ENCODE measurements at regions of chr1 and their contacts with region 1.

Region 1: DNA sequence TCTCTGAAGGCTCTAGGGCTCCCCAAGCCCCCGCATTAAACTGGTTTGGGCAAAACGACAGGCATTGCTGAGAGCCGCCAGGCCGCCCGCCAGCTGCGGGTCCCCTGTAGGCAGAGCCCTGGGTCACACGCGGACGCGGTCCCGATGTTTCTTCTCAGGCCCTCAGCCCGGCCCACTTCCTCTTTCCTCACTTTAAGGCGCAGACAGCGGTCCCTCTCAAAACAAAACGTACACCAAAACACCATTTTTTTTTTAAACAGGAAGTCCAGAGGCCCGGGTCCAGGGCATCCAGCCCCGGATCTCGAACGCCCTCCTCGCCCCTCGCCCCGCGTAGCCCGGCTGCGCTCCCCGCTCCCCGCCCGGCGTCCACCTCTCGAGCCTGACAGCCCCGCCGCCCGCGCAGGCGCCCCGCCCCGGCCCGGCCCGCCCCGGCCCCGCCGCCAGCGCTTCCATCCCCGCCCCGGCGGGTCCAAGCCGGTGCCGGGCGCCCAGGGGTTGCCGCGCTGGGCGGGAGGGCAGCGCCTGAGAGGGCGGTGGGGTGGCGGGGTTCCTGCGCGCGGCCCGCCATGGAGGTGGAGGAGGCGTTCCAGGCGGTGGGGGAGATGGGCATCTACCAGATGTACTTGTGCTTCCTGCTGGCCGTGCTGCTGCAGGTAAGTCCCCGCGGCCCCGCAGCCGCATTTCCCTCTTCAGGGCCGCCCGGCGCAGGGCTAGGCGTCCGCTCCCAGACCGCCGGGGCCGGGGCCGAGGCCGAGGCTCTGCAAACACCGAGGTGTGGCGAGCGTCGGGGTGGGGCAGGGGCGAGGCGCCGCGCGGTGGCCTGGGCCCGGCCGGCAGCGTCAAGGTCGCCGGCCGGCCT is at the start of gene SLC22A15:
- DNase-seq: peak; percentile 93
- ATAC-seq: peak; percentile 87
- total RNA-seq, gene SLC22A15: 10.3 TPM

Region 2: DNA sequence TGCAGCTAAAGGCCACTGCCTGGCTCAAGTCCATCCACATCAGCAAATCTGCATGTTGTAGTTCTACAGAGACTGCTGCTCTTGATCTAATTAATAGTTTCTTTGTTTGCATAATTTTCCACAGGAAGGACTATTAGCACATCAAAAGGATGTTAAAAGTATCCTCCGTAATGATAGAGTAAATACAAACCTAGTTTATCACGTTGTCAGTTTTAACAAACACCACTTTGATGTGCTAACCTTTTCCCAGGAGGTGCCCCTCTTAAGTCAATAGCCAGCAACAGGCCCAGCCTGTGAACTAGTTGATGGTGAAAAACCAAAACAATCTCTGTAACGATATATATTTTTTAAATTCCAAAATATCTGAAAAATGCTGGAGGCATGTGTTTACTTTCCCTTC is 64.2 kb before region 1 on chr1:
- intact Hi-C with region 1: no loop called
- DNase-seq: no peak
- ATAC-seq: no peak

Region 3: GRCh38 chr1:116019653-116020253 is 43.5 kb after region 1 on chr1:
- intact Hi-C with region 1: loop called (anchors 5 kb)
- DNase-seq: no peak
- ATAC-seq: no peak